ENCODE measurements at regions of chr20 and their contacts with region 1.

Region 1: GRCh38 chr20:50120897-50121693 is 8.1 kb upstream of the UBE2V1 start:
- DNase-seq: peak; percentile 40 to 76 (median 56)
- H3K4me3 ChIP-seq: no peak overlapping the region
- H3K4me3 Mint-ChIP-seq: no peak overlapping the region
- H3K27ac ChIP-seq: no peak overlapping the region
- H3K27ac Mint-ChIP-seq: peak overlapping the region in 1 of 8 donors; percentile 4
- H3K4me1 ChIP-seq: peaks cover 4% of the 10 kb centered on the region
- H3K4me1 Mint-ChIP-seq: peaks cover 2 to 11% (median 3%) of the 10 kb centered on the region in 3 donors
- H3K27me3 ChIP-seq: no peaks in the 10 kb centered on the region
- H3K27me3 Mint-ChIP-seq: no peaks in the 10 kb centered on the region

Region 2: DNA sequence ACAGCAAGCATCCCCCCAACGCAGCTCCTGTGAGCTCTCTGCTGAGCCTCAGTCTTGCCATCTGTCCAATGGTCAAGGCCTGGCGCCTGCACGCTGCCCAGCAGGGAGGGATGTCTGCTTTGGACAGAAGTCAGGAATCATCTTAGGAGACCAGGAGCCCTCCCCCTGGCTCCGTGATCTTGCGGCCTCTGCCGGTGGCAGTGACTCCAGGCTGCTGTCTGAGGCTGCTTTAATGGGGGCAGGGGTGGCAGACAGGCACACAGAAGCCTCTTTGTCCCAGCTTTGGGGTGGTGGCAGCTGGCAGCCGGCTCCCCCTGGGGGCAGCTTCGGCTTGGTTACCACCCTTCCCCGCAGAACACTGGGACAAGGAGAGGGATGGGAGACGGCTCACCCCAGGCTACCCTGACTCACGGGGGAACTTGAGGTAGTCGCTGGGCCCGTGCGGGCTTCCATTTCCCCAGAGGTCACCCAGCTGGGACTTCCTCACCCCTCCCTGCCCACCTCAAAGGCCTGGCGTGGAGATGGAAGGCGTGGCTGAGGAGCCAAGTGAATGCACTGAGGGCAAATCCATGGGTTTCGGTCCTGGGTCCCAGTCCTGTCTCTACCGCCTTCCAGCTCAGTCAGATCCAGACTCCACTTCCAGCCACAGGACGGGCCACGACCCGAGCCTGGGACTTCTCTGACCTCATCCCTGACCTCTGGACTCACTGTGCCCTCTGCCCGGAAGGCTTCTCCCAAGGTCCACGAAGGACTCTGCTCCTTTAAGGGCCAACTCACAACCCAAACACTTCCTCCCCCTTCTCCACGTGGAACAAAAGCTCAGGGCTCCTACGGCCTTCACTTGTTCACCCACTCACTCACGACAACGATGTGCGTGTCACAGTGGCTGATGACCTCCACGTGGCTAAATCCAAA is 17.6 kb after region 1 on chr20:
- CTCF ChIA-PET with region 1: interaction called, 12 read pairs
- POLR2A ChIA-PET with region 1: no interaction called
- DNase-seq: no peak
- H3K4me3 ChIP-seq: no peak overlapping the region
- H3K4me3 Mint-ChIP-seq: no peak overlapping the region
- H3K27ac ChIP-seq: no peak overlapping the region
- H3K27ac Mint-ChIP-seq: peak overlapping the region in 2 of 8 donors; percentile 23 to 56
- H3K4me1 ChIP-seq: no peaks in the 10 kb centered on the region
- H3K4me1 Mint-ChIP-seq: peaks cover 25 to 48% (median 30%) of the 10 kb centered on the region in 3 donors
- H3K27me3 ChIP-seq: no peaks in the 10 kb centered on the region
- H3K27me3 Mint-ChIP-seq: peaks cover 0 to 1% of the 10 kb centered on the region in 2 donors

Region 3: DNA sequence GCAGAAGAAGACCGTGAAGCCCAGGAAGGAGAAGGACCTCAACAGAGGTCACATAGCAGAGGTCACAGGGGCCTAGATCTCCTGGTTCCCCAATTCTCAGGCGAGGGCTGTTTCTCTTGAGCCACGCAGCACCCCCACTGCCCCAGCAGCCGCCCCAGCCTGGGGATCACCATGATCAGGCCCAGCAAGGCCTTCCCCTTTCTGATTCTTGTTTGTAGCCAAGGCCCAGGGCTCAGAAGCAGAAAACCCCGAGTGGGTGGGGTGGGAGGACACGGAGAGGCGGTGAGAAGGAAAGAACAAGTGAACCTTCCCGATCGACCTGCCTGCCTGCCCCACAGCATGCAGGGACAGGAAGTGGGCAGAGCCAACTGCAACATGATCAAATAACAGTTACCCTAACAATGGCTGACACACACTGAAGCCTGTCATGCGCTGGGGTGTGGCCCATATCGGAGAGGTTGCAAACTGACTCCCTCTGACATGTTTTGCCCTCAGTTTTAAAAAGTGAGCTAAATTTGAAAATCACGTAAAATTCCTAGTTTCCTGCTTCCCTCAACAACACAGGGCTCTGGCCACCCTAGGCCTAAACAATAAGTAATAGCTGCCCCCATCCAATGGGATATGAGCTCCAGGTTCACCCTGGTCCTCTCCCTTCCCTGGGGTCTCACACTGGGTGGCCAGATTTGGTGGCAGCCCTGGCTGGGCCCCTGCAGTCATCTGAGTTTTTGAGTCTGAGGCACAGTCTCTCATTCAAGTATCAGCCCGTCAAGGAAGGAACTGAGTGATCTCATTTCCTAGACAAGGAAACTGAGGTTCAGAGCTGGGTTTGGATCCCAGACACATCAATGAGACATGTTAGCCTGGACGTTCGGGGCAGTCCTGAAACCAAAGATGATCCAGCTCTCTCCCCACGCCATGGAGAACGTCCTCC is 25.9 kb after region 1 on chr20:
- CTCF ChIA-PET with region 1: interaction called, 70 read pairs
- POLR2A ChIA-PET with region 1: interaction called, 6 read pairs
- DNase-seq: peak; percentile 55 to 85 (median 78)
- H3K4me3 ChIP-seq: peak overlapping the region; percentile 60
- H3K4me3 Mint-ChIP-seq: peak overlapping the region; percentile 73 to 92 (median 85)
- H3K27ac ChIP-seq: peak overlapping the region; percentile 66
- H3K27ac Mint-ChIP-seq: peak overlapping the region; percentile 94 to 98 (median 96)
- H3K4me1 ChIP-seq: peaks cover 38% of the 10 kb centered on the region
- H3K4me1 Mint-ChIP-seq: peaks cover 62 to 77% (median 68%) of the 10 kb centered on the region in 3 donors
- H3K27me3 ChIP-seq: no peaks in the 10 kb centered on the region
- H3K27me3 Mint-ChIP-seq: peaks cover 0 to 2% of the 10 kb centered on the region in 2 donors

Region 4: GRCh38 chr20:50153485-50154377 is 32.6 kb after region 1 on chr20 and contains the start of gene PEDS1:
- CTCF ChIA-PET with region 1: interaction called, 70 read pairs
- POLR2A ChIA-PET with region 1: interaction called, 11 read pairs
- DNase-seq: peak; percentile 77 to 86 (median 82)
- H3K4me3 ChIP-seq: peak within 1 kb of the TSS; percentile 91
- H3K4me3 Mint-ChIP-seq: peak within 1 kb of the TSS; percentile 83 to 94 (median 86)
- H3K27ac ChIP-seq: peak within 1 kb of the TSS; percentile 89
- H3K27ac Mint-ChIP-seq: peak within 1 kb of the TSS; percentile 81 to 97 (median 93)
- H3K4me1 ChIP-seq: peaks cover 26% of the 10 kb centered on the region
- H3K4me1 Mint-ChIP-seq: peaks cover 41 to 52% (median 50%) of the 10 kb centered on the region in 3 donors
- H3K27me3 ChIP-seq: no peaks in the 10 kb centered on the region
- H3K27me3 Mint-ChIP-seq: no peaks in the 10 kb centered on the region
- total RNA-seq, gene PEDS1: 20.2 to 23.6 TPM

Measured in CD8-positive, alpha-beta memory T cell (primary cell).